Activated T-helper 1 cell treated with anti-CD3 and anti-CD28 coated beads, Interleukin-12 subunit alpha, Interleukin-12 subunit beta, Interleukin-2, Interleukin-4 antibody, amounts not matched to agents 30 ng/mL and 10 ng/mL and 1 ng/mL, durations not matched to agents 14 hours and 24 hours and 36 hours (primary cell): ENCODE measurements at regions of chr19 and their contacts with region 1.

Region 1: GRCh38 chr19:52637718-52638585 is at the start of gene ZNF83:
- DNase-seq: peak; percentile 94
- H3K4me3 Mint-ChIP-seq: peak within 1 kb of the TSS; percentile 93
- H3K27ac Mint-ChIP-seq: peak within 1 kb of the TSS; percentile 95
- H3K4me1 Mint-ChIP-seq: peaks cover 26% of the 10 kb centered on the region
- H3K27me3 Mint-ChIP-seq: no peaks in the 10 kb centered on the region
- total RNA-seq, gene ZNF83: 23.5 and 25.8 TPM in 2 replicates

Region 2: DNA sequence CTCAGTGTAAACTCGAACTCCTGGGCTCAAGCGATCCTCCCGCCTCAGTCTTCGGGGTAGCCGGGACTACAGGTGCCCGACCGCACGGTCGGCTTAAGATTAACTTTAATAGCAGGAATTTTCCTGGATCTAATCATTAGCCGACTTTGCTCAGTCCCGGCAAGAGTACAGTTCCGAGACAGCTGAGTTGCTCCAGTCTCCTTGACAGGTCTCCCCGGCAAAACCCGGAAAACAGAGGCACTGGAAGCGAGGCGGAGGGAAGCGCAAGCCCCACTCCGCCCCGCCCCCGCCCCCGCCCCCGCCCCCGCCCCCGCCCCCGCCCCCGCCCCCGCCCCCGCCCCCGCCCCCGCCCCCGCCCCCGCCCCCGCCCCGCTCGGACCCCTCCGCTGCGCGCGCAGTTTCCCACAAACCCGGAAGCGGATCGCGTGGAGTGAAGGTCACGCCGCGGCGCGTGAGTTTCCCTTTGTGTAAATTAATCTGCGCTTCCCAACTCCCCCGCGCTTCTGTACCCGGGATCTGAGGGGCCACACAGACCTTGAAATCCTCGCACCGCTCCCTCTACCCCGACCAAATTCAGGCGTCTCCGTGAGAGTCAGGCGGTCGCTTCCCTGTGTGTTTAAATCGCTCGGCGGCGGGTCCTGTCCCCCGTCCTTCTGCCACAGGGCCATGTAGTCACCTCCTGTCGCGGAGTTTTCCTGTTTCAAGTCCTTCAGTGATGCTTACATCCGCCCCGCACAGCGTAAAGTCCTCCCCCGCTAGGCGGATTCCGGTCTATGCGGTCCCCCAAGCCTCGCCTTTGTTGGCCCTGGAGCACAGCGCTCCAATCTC is 341.0 kb before region 1 on chr19 and contains the start of gene ZNF480:
- intact Hi-C with region 1: loop called (anchors 1 kb)
- DNase-seq: peak; percentile 74
- H3K4me3 Mint-ChIP-seq: peak within 1 kb of the TSS; percentile 90
- H3K27ac Mint-ChIP-seq: peak within 1 kb of the TSS; percentile 97
- H3K4me1 Mint-ChIP-seq: peaks cover 17% of the 10 kb centered on the region
- H3K27me3 Mint-ChIP-seq: peaks cover 2% of the 10 kb centered on the region
- total RNA-seq, gene ZNF480: 3.5 and 4.8 TPM in 2 replicates

Region 3: DNA sequence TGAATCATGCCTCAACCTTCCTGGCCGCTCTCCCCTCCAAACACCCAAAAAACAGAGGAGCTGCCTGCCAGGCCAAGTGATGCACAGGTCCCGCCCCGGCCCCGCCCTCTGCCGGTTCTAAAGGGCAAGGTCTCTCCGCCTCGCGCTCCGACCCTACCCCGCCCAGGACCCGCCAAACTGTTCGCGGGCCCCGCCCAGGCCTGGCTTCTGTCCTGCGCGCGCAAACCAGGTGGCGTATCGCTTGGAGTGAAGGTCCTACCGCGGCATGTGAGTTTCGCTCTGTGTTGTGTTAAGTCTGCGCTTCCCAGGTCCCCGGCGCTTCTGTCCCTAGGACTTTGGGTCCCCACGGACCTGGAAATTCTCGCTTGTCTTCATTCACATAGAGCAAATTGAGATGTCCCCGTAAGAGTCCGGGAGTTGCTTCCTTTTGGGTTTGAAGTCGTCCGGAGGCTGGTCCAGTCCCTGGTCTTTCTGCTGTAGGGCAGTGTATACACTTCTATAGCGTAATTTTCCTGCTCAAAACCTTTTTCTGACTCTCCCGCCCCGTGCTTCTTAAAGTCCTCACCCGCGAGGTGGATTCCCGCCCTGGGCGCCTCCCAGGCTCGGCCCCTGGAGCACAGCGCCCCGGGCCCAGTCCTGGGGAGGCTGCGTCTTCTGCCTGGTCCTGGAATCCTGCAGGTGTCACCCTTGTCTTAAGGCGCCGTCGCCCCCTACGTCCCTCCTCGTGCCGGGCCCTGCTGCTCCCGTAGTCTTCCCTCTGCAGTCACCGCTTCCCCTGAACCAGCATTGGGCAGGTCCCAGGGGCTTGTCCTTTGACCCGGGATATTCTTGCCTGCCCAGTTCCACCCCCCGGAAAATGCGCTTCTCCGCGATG is 145.1 kb before region 1 on chr19:
- intact Hi-C with region 1: no loop called
- DNase-seq: no peak
- H3K4me3 Mint-ChIP-seq: no peak overlapping the region
- H3K27ac Mint-ChIP-seq: no peak overlapping the region
- H3K4me1 Mint-ChIP-seq: no peaks in the 10 kb centered on the region
- H3K27me3 Mint-ChIP-seq: no peaks in the 10 kb centered on the region

Region 4: DNA sequence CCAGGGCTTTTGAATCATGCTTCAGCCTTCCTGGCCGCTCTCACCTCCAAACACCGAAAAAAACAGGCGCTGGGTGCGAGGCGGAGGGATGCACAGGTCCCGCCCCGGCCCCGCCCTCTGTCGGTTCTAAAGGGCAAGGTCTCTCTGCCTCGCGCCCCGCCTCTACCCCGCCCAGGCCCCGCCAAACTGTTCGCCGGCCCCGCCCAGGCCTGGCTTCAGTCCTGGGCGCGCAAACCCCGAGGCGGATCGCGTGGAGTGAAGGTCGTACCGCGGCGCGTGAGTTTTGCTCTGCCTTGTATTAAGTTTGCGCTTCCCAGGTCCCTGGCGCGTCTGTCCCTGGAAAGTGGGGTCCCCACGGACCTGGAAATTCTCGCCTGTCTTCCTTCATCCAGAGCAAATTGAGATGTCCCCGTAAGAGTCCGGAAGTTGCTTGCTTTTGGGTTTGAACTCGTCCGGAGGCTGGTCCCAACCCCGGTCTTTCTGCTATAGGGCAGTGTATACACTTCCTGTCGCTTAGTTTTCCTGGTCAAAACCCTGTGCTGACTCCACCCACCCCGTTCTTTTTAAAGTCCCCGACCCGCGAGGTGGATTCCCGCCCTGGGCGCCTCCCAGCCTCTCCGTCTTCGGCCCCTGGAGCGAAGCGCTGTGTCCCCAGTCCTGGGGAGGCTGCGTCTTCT is 102.0 kb before region 1 on chr19:
- intact Hi-C with region 1: loop called (anchors 1 kb)
- DNase-seq: peak; percentile 80
- H3K4me3 Mint-ChIP-seq: peak overlapping the region; percentile 84
- H3K27ac Mint-ChIP-seq: peak overlapping the region; percentile 88
- H3K4me1 Mint-ChIP-seq: peaks cover 11% of the 10 kb centered on the region
- H3K27me3 Mint-ChIP-seq: no peaks in the 10 kb centered on the region

Region 5: GRCh38 chr19:52665529-52665928 is 27.6 kb after region 1 on chr19:
- intact Hi-C with region 1: no loop called
- DNase-seq: no peak
- H3K4me3 Mint-ChIP-seq: no peak overlapping the region
- H3K27ac Mint-ChIP-seq: no peak overlapping the region
- H3K4me1 Mint-ChIP-seq: no peaks in the 10 kb centered on the region
- H3K27me3 Mint-ChIP-seq: no peaks in the 10 kb centered on the region

Region 6: DNA sequence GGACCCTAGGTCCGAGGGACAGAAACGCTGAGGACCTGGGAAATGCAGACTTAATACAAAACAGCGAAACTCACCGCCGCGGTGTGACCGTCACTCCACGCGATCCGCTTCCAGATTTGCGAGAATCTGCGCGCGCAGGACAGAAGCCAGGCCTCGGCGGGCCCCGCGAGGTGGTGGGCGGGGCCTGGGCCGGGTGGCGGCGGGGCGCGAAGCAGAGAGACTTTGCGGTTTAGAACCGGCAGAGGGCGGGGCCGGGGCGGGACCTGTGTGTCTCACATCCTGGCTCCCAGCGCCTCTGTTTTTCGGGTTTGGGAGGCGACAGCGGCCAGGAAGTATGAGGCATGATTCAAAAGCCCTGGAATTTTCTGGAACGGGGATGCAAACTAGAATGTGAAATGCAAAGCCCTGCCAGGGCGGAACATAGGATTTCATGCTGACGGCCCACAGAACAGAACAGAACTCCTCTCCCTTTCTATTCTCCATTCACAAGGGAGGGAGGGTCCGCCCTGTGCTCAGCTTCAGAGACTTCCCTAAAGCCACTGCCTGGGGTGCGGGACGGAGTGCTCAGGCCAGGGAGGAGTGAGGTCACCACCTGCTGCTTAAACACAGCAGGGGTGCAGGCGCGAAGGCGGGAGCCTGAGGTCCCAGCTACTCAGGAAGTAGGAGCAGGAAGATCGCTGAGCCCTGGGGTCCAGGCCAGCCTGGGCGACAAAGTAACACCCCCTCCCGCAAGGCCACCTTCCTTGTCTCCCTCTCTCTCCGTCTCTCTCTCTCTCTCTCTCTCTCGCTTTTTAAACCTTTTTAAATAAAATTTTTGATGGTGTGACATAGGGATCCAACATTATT is 52.6 kb after region 1 on chr19:
- intact Hi-C with region 1: loop called (anchors 1 kb)
- DNase-seq: peak; percentile 90
- H3K4me3 Mint-ChIP-seq: peak overlapping the region; percentile 94
- H3K27ac Mint-ChIP-seq: peak overlapping the region; percentile 97
- H3K4me1 Mint-ChIP-seq: peaks cover 33% of the 10 kb centered on the region
- H3K27me3 Mint-ChIP-seq: no peaks in the 10 kb centered on the region

Region 7: GRCh38 chr19:52897144-52897935 is 259.4 kb after region 1 on chr19 and contains the start of gene ZNF320:
- intact Hi-C with region 1: loop called (anchors 1 kb)
- DNase-seq: peak; percentile 90
- H3K4me3 Mint-ChIP-seq: peak within 1 kb of the TSS; percentile 92
- H3K27ac Mint-ChIP-seq: peak within 1 kb of the TSS; percentile 87
- H3K4me1 Mint-ChIP-seq: peaks cover 4% of the 10 kb centered on the region
- H3K27me3 Mint-ChIP-seq: no peaks in the 10 kb centered on the region
- total RNA-seq, gene ZNF320: 10.5 and 11.0 TPM in 2 replicates

Region 8: GRCh38 chr19:52962394-52963246 is 324.7 kb after region 1 on chr19 and contains the start of gene ZNF816:
- intact Hi-C with region 1: loop called (anchors 1 kb)
- DNase-seq: peak; percentile 99
- H3K4me3 Mint-ChIP-seq: peak within 1 kb of the TSS; percentile 98
- H3K27ac Mint-ChIP-seq: peak within 1 kb of the TSS; percentile 93
- H3K4me1 Mint-ChIP-seq: peaks cover 25% of the 10 kb centered on the region
- H3K27me3 Mint-ChIP-seq: no peaks in the 10 kb centered on the region
- total RNA-seq, gene ZNF816: 7.0 and 9.4 TPM in 2 replicates

Region 9: DNA sequence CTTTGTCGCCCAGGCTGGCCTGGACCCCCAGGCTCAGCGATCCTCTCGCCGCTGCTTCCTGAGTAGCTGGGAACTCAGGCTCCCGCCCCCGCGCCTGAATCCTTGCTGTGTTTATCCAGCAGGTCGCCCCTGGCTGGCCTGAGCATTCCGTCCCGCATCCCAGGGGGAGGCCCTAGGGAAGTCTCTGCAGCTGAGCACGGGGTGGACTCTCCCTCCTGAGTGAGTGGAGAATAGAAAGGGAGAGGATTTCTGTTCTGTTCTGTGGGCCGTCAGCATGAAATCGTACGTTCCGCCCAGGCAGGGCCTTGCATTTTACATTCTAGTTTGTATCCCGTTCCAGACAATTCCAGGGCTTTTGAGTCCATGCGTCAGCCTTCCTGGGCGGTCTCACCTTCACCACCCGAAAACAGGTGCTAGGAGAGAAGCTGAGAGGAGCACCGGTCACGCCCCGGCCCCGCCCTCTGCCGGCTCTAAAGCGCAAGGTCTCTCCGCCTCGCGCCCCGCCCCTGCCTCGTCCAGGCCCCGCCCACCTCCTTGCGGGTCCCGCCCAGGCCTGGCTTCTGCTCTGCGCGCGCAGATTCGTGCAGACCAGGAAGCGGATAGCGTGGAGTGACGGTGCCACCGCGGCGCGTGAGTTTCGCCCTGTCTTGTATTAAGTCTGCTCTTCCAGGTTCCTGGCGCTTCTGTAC is 793.6 kb after region 1 on chr19 and contains the start of gene ZNF761:
- intact Hi-C with region 1: loop called (anchors 1 kb)
- DNase-seq: peak; percentile 96
- H3K4me3 Mint-ChIP-seq: peak within 1 kb of the TSS; percentile 88
- H3K27ac Mint-ChIP-seq: peak within 1 kb of the TSS; percentile 94
- H3K4me1 Mint-ChIP-seq: peaks cover 25% of the 10 kb centered on the region
- H3K27me3 Mint-ChIP-seq: no peaks in the 10 kb centered on the region
- total RNA-seq, gene ZNF761: 9.9 and 12.3 TPM in 2 replicates